Esophagus muscularis mucosa (tissue), 4 donors: ENCODE measurements at regions of chr2 and their contacts with region 1.

Region 1: GRCh38 chr2:9630749-9631483 is at the start of gene YWHAQ:
- DNase-seq: peak; percentile 100
- H3K4me3 ChIP-seq: peak within 1 kb of the TSS; percentile 71 to 84 (median 81)
- H3K27ac ChIP-seq: peak within 1 kb of the TSS; percentile 92 to 98 (median 96)
- H3K4me1 ChIP-seq: peaks cover 39 to 48% (median 47%) of the 10 kb centered on the region in 4 donors
- H3K27me3 ChIP-seq: no peaks in the 10 kb centered on the region
- CTCF ChIP-seq: no peak
- EP300 ChIP-seq: no peak
- POLR2A ChIP-seq: peak; percentile 97
- total RNA-seq, gene YWHAQ: 223 to 239 (median 230) TPM

Region 2: GRCh38 chr2:9555297-9556141 is 75.4 kb before region 1 on chr2 and contains the start of gene ADAM17:
- intact Hi-C with region 1: loop called (anchors 2 kb)
- DNase-seq: peak; percentile 99
- H3K4me3 ChIP-seq: peak within 1 kb of the TSS; percentile 74 to 96 (median 83)
- H3K27ac ChIP-seq: peak within 1 kb of the TSS; percentile 96 to 99 (median 98)
- H3K4me1 ChIP-seq: peaks cover 56 to 76% (median 74%) of the 10 kb centered on the region in 4 donors
- H3K27me3 ChIP-seq: no peaks in the 10 kb centered on the region
- CTCF ChIP-seq: peak; percentile 25 to 68 (median 31)
- EP300 ChIP-seq: peak; percentile 54
- POLR2A ChIP-seq: peak; percentile 82
- total RNA-seq, gene ADAM17: 12.9 to 17.7 (median 14.9) TPM

Region 3: GRCh38 chr2:9675415-9676351 is 44.8 kb after region 1 on chr2:
- intact Hi-C with region 1: no loop called
- DNase-seq: no peak
- H3K4me3 ChIP-seq: peak overlapping the region in 1 of 4 donors; percentile 36
- H3K27ac ChIP-seq: peak overlapping the region in 3 of 4 donors; percentile 15 to 28 (median 19)
- H3K4me1 ChIP-seq: peaks cover 0 to 12% (median 11%) of the 10 kb centered on the region in 4 donors
- H3K27me3 ChIP-seq: no peaks in the 10 kb centered on the region
- CTCF ChIP-seq: no peak
- EP300 ChIP-seq: no peak
- POLR2A ChIP-seq: no peak